WTC11 (cell line): ENCODE measurements at regions of chr17 and their contacts with region 1.

Region 1: GRCh38 chr17:45277216-45277849 is 15.4 kb upstream of the SPATA32 start:
- DNase-seq: peak; percentile 96
- ATAC-seq: peak; percentile 87
- H3K4me3 Mint-ChIP-seq: no peak overlapping the region
- H3K27ac Mint-ChIP-seq: no peak overlapping the region
- H3K4me1 Mint-ChIP-seq: peaks cover 12% of the 10 kb centered on the region
- H3K27me3 Mint-ChIP-seq: no peaks in the 10 kb centered on the region
- CTCF ChIP-seq: peak; percentile 72

Region 2: GRCh38 chr17:45228763-45229539 is 48.4 kb before region 1 on chr17:
- CTCF ChIA-PET with region 1: interaction called, 23 read pairs
- POLR2A ChIA-PET with region 1: no interaction called
- DNase-seq: peak; percentile 59
- ATAC-seq: peak; percentile 27
- H3K4me3 Mint-ChIP-seq: no peak overlapping the region
- H3K27ac Mint-ChIP-seq: no peak overlapping the region
- H3K4me1 Mint-ChIP-seq: peaks cover 20% of the 10 kb centered on the region
- H3K27me3 Mint-ChIP-seq: peaks cover 26% of the 10 kb centered on the region
- CTCF ChIP-seq: no peak

Region 3: DNA sequence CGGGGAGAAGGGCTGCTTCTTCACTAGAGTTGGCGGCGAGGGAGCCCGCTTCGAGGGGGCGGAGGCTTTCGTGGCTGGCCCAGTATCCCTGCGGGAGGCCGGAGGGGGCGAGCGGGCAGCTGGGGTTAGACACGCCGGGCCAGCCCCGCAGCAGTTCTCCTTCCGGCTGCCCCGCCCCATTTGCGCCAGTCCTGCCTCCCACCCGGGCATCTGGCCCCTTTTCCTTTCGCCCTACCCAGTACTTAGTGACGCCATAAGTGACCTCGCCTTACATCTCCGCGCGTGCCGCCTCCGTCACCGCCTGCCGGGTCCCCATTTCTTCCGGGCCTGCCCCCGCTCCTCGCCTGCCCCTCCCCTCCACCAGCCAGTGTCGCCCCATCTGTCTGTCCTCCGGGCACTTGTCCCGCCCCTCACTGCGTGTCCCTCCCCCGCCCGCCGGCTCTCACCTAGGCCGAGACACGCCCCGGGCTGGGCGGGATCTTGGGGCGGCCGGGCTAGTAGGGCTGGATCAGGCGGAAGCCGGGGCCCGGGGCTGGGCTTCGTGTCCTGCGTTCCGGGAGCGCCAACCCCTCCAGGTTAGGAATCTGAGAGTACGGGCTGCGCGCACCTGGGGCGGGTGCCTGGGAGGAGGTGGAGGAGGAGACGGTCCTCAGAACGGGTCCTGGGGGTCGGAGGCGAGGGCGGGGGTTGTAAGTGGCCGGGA is 29.8 kb before region 1 on chr17:
- CTCF ChIA-PET with region 1: interaction called, 25 read pairs
- POLR2A ChIA-PET with region 1: no interaction called
- DNase-seq: peak; percentile 99
- ATAC-seq: peak; percentile 87
- H3K4me3 Mint-ChIP-seq: peak overlapping the region; percentile 83
- H3K27ac Mint-ChIP-seq: peak overlapping the region; percentile 80
- H3K4me1 Mint-ChIP-seq: peaks cover 21% of the 10 kb centered on the region
- H3K27me3 Mint-ChIP-seq: peaks cover 2% of the 10 kb centered on the region
- CTCF ChIP-seq: no peak

Region 4: DNA sequence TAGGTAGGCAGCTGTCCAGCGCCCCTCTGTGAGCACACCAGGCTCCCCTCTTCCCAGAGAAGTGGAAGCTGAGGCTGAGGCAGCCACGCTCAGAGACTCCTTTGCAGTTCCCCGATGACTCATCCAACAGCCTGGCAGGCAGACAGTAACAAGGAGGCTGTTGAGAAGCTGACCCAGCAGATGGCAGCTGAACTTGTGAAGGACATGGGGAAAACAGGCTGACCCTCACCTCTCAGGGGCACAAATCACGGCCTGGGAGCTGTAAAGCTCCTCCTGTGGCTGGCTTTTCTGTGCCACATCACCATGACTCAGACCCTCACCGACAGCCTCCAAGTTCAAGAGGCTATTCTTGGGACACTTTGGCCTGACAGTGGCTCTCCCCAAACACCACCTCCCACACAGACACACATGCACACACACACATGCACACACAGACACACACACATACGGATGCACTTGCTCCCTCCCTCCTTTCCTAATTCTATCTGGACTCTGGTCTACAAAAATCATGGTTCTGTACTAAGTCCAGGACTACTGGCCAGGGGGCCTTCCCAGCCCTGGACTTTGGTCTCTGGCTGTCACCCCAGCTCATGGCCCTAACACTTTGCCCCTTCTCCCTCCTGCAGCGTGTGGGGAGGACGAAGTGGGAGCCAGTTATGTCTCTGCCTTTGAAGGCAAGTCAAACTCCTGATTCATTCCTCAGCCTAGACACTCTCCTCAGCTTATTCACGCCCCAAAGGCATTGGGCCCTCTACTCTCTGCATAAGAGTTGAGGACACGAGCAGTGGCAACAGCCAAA is 16.3 kb after region 1 on chr17:
- CTCF ChIA-PET with region 1: interaction called, 28 read pairs
- POLR2A ChIA-PET with region 1: no interaction called
- DNase-seq: no peak
- ATAC-seq: no peak
- H3K4me3 Mint-ChIP-seq: no peak overlapping the region
- H3K27ac Mint-ChIP-seq: no peak overlapping the region
- H3K4me1 Mint-ChIP-seq: no peaks in the 10 kb centered on the region
- H3K27me3 Mint-ChIP-seq: no peaks in the 10 kb centered on the region
- CTCF ChIP-seq: no peak

Region 5: DNA sequence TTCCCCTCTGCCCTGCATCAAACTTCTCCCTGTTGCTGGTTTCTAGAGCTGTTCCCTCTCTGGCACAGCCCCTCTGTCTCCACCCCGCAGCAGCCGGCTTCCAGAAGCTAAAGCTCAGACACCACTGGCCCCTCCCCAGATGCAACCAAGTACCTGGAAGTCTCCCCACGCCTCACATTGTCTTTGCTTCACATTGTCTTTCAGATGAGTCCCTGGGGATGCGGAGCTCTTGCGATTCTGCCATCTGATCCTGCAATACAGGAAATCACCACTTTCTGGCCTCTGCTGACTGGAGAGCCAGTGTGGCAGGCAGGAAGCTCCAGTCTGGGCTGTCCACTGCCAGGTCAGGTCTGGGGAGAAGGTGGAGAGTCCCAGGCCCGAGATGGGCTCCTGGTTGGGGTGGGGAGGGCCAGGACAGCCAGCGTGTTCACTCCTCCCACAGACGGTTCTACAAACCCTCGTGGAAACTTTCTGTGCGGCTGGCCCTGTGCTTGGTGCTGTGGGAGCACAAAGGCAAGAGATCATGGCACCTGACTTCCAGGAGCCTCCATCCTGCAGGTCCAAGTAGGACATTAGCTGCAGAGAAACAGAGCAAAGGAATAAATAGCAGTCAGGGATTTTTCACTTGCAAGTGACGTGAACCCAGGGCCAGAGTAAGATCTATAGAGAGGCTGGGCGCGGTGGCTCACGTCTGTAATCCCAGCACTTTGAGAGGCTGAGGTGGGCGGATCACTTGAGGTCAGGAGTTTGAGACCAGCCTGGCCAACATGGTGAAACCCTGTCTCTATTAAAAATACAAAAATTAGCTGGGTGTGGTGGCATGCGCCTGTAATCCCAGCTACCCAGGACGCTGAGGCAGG is 87.4 kb after region 1 on chr17:
- CTCF ChIA-PET with region 1: interaction called, 20 read pairs
- POLR2A ChIA-PET with region 1: no interaction called
- DNase-seq: peak; percentile 79
- ATAC-seq: peak; percentile 98
- H3K4me3 Mint-ChIP-seq: peak overlapping the region; percentile 36
- H3K27ac Mint-ChIP-seq: peak overlapping the region; percentile 97
- H3K4me1 Mint-ChIP-seq: peaks cover 39% of the 10 kb centered on the region
- H3K27me3 Mint-ChIP-seq: peaks cover 6% of the 10 kb centered on the region
- CTCF ChIP-seq: no peak

Region 6: DNA sequence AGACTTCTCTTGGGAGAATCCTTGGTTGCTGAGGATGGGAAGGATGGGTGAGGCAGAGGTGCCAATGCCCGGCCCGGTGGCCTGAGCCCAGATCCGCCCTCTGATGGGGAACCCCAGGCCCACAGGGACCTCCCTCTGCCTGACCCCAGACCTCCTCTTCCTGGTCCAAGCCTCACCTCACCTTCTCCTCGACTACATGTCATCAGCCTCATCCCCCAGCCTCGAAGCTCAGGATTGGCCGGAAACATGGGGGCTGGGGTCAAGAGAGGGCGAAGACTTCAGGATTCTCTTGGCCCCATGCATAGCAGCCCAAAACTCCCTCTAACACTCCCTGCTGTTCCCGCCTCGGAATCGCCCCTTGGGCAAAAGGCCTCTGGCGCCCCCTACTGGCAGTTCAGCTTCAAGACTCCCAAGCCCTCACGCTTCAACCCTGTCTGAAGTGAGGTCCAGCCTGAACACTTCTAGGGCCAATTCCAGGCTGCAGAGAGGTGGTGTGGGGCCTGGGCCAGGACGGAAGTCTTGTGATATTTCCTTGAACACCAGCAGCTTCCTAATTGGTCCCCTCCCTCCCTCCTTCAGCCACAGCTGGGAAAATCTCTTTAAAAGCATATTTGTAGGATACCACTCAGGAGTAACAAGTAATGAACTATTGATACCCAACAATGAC is 108.1 kb after region 1 on chr17:
- CTCF ChIA-PET with region 1: interaction called, 81 read pairs
- POLR2A ChIA-PET with region 1: no interaction called
- DNase-seq: peak; percentile 94
- ATAC-seq: peak; percentile 86
- H3K4me3 Mint-ChIP-seq: no peak overlapping the region
- H3K27ac Mint-ChIP-seq: no peak overlapping the region
- H3K4me1 Mint-ChIP-seq: peaks cover 24% of the 10 kb centered on the region
- H3K27me3 Mint-ChIP-seq: peaks cover 16% of the 10 kb centered on the region
- CTCF ChIP-seq: peak; percentile 98

Region 7: GRCh38 chr17:45428050-45428617 is 150.8 kb after region 1 on chr17:
- CTCF ChIA-PET with region 1: interaction called, 21 read pairs
- POLR2A ChIA-PET with region 1: no interaction called
- DNase-seq: peak; percentile 86
- ATAC-seq: peak; percentile 15
- H3K4me3 Mint-ChIP-seq: peak overlapping the region; percentile 67
- H3K27ac Mint-ChIP-seq: no peak overlapping the region
- H3K4me1 Mint-ChIP-seq: peaks cover 36% of the 10 kb centered on the region
- H3K27me3 Mint-ChIP-seq: peaks cover 57% of the 10 kb centered on the region
- CTCF ChIP-seq: peak; percentile 99